GM13977 (cell line): ENCODE measurements at regions of chr4 and their contacts with region 1.

Region 1: GRCh38 chr4:140609548-140610425 is 41.0 kb upstream of the UCP1 start:
- DNase-seq: peak; percentile 72
- CTCF ChIP-seq: peak; percentile 42

Region 2: GRCh38 chr4:140359562-140360427 is 250.0 kb before region 1 on chr4:
- in situ Hi-C with region 1: loop called (anchors 25 kb)
- DNase-seq: peak; percentile 53
- CTCF ChIP-seq: peak; percentile 77

Region 3: DNA sequence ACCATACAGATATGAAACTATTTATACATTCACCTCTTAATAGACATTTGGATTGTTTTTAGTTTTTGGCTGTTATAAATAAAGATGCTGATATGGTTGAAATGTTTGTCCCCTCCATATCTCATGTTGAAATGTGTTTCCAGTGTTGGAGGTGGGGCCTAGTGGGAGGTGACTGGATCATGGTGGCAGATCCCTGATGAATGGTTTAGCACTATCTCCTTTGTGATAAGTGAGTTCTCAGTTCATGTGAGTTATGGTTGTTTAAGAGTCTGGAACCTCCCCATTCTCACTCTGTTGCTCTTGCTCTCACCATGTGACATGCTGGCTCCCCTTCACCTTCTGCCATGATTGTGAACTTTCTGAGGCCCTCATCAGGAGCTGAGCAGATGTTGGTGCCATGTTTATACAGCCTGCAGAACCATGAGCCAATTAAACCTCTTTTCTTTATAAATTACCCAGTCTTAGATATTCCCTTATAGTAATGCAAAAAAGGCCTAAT is 170.1 kb before region 1 on chr4:
- in situ Hi-C with region 1: no loop called
- DNase-seq: no peak
- CTCF ChIP-seq: no peak

Region 4: GRCh38 chr4:140697709-140698560 is 88.1 kb after region 1 on chr4:
- in situ Hi-C with region 1: no loop called
- DNase-seq: no peak
- CTCF ChIP-seq: no peak

Region 5: GRCh38 chr4:140829825-140830224 is 220.0 kb after region 1 on chr4:
- in situ Hi-C with region 1: loop called (anchors 25 kb)
- DNase-seq: no peak
- CTCF ChIP-seq: no peak